ENCODE measurements at regions of chr1 and their contacts with region 1.

Region 1: DNA sequence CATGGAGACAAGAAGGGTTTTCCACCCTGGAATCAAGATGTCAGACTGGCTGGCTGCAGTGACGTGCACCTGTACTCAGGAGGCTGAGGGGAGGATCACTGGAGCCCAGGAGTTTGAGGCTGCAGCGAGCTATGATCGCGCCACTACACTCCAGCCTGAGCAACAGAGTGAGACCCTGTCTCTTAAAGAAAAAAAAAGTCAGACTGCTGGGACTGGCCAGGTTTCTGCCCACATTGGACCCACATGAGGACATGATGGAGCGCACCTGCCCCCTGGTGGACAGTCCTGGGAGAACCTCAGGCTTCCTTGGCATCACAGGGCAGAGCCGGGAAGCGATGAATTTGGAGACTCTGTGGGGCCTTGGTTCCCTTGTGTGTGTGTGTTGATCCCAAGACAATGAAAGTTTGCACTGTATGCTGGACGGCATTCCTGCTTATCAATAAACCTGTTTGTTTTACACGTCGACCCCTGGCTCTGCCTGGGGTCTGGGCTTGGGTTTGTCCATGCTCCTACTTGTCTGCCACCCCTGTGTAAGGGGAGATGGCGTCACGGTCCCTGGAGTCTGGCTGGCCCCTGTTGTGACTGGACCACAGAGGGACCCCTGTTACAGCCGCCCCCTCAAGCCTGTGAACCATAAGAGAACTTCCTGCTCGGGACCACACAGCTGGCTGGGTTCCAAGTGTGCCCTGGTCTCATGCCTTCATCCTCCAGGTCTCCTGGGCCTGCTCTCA is 20.9 kb upstream of the VPS13D start:
- DNase-seq: peak; percentile 82
- H3K4me3 ChIP-seq: no peak overlapping the region
- H3K27ac ChIP-seq: no peak overlapping the region
- H3K4me1 ChIP-seq: peaks cover 31% of the 10 kb centered on the region
- CTCF ChIP-seq: peak; percentile 95

Region 2: DNA sequence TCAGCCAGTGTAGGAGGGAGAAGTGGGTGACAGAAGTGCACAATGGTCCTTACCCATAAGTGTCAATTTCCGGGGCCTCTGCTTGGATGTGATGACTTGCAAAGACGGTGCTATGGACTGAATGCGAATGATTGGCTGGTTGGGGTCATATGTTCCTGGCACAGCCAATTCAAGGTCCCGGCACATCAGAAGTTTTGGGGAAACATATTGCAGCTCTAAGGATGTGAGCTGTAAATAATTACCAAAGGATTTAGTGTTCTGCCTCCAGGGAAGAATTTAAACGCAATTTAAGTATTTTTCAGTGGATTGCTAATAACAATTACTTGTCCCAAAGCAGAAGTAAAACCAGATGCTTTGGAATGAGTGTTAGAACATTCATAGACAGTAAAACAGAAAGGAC is 1082.4 kb before region 1 on chr1:
- CTCF ChIA-PET with region 1: no interaction called
- POLR2A ChIA-PET with region 1: no interaction called
- intact Hi-C with region 1: no loop called
- DNase-seq: no peak
- H3K4me3 ChIP-seq: no peak overlapping the region
- H3K27ac ChIP-seq: no peak overlapping the region
- H3K4me1 ChIP-seq: no peaks in the 10 kb centered on the region
- CTCF ChIP-seq: no peak

Region 3: GRCh38 chr1:11979851-11980675 is 228.9 kb before region 1 on chr1 and contains the start of gene MFN2:
- CTCF ChIA-PET with region 1: no interaction called
- POLR2A ChIA-PET with region 1: no interaction called
- intact Hi-C with region 1: no loop called
- DNase-seq: peak; percentile 93
- H3K4me3 ChIP-seq: peak within 1 kb of the TSS; percentile 93
- H3K27ac ChIP-seq: peak within 1 kb of the TSS; percentile 60
- H3K4me1 ChIP-seq: peaks cover 21% of the 10 kb centered on the region
- CTCF ChIP-seq: no peak
- total RNA-seq, gene MFN2: 28.3 and 32.2 TPM in 2 replicates

Region 4: GRCh38 chr1:12124693-12125421 is 84.1 kb before region 1 on chr1:
- CTCF ChIA-PET with region 1: interaction called, 9 read pairs
- POLR2A ChIA-PET with region 1: interaction called, 7 read pairs
- intact Hi-C with region 1: loop called (anchors 1 kb)
- DNase-seq: peak; percentile 70
- H3K4me3 ChIP-seq: no peak overlapping the region
- H3K27ac ChIP-seq: no peak overlapping the region
- H3K4me1 ChIP-seq: no peaks in the 10 kb centered on the region
- CTCF ChIP-seq: peak; percentile 92

Region 5: GRCh38 chr1:12272770-12273169 is 63.8 kb after region 1 on chr1:
- CTCF ChIA-PET with region 1: no interaction called
- POLR2A ChIA-PET with region 1: no interaction called
- intact Hi-C with region 1: no loop called
- DNase-seq: no peak
- H3K4me3 ChIP-seq: no peak overlapping the region
- H3K27ac ChIP-seq: no peak overlapping the region
- H3K4me1 ChIP-seq: no peaks in the 10 kb centered on the region
- CTCF ChIP-seq: no peak

Measured in OCI-LY7 (cell line).